ENCODE measurements at regions of chr10 and their contacts with region 1.

Region 1: GRCh38 chr10:61733358-61733940 is 70.7 kb downstream of the CABCOCO1 start:
- DNase-seq: no peak
- H3K4me3 ChIP-seq: no peak overlapping the region
- CTCF ChIP-seq: peak; percentile 45

Region 2: GRCh38 chr10:61669161-61669725 is 64.2 kb before region 1 on chr10:
- CTCF ChIA-PET with region 1: no interaction called
- POLR2A ChIA-PET with region 1: no interaction called
- DNase-seq: no peak
- H3K4me3 ChIP-seq: no peak overlapping the region
- CTCF ChIP-seq: no peak

Region 3: GRCh38 chr10:61721431-61721830 is 12.0 kb before region 1 on chr10:
- CTCF ChIA-PET with region 1: interaction called, 21 read pairs
- POLR2A ChIA-PET with region 1: no interaction called
- DNase-seq: no peak
- H3K4me3 ChIP-seq: no peak overlapping the region
- CTCF ChIP-seq: no peak

Measured in AG04449 (cell line).